Calu3 (cell line): ENCODE measurements at regions of chr9 and their contacts with region 1.

Region 1: GRCh38 chr9:4750023-4750673 is 9.1 kb upstream of the AK3 start:
- DNase-seq: no peak
- H3K4me3 Mint-ChIP-seq: no peak overlapping the region
- H3K27ac Mint-ChIP-seq: no peak overlapping the region
- H3K4me1 Mint-ChIP-seq: no peaks in the 10 kb centered on the region
- H3K27me3 Mint-ChIP-seq: peaks cover 17% of the 10 kb centered on the region
- CTCF ChIP-seq: no peak

Region 2: GRCh38 chr9:4814913-4815312 is 64.8 kb after region 1 on chr9:
- CTCF ChIA-PET with region 1: no interaction called
- intact Hi-C with region 1: no loop called
- DNase-seq: no peak
- H3K4me3 Mint-ChIP-seq: no peak overlapping the region
- H3K27ac Mint-ChIP-seq: peak overlapping the region; percentile 7
- H3K4me1 Mint-ChIP-seq: peaks cover 21% of the 10 kb centered on the region
- H3K27me3 Mint-ChIP-seq: no peaks in the 10 kb centered on the region
- CTCF ChIP-seq: no peak

Region 3: DNA sequence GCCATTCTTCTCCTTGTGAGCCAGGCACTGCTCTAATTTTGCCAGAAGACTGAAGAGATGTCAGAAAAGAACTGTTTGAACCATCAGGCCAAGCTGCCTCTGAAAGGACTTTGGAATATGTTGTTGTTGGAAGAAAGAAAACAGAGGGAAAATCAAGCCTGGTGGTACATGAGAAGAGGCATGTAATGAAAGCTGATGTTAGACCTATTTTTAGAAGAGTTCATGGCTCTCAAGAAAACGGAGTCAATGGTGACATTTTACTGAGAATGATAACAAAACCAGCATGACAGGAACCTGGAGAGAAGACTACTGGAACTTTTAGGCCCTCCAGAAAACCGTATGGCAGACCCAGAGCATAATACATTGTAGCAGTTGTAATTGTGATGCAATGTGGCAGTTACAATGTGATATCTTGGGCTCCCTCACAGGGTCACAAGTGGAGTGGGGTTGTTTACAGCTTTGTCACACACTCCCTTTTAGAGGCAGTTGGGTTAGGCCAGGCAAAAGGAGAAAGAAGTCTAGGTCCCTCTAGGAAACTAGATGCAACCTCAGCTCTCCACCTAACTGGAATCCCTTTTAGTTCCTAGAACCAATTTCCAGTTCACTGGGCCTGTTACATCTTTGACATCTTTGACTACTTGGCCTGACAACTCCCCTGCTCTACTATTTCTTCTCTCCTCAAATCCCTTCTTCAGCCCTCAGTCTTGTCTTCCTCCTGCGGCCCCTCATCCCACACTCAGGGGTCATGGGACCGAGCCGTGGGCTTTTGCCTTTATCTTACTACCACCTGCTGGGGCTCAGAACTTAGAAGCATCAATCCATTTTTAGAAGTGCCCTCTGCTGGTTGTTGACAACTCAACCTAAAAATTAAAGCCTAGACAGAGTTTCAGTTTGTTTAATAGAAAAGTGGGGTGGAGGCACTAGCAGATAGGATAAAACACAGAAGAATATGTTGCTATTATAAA is 173.7 kb after region 1 on chr9:
- CTCF ChIA-PET with region 1: no interaction called
- intact Hi-C with region 1: no loop called
- DNase-seq: peak; percentile 3
- H3K4me3 Mint-ChIP-seq: no peak overlapping the region
- H3K27ac Mint-ChIP-seq: no peak overlapping the region
- H3K4me1 Mint-ChIP-seq: peaks cover 8% of the 10 kb centered on the region
- H3K27me3 Mint-ChIP-seq: no peaks in the 10 kb centered on the region
- CTCF ChIP-seq: no peak

Region 4: DNA sequence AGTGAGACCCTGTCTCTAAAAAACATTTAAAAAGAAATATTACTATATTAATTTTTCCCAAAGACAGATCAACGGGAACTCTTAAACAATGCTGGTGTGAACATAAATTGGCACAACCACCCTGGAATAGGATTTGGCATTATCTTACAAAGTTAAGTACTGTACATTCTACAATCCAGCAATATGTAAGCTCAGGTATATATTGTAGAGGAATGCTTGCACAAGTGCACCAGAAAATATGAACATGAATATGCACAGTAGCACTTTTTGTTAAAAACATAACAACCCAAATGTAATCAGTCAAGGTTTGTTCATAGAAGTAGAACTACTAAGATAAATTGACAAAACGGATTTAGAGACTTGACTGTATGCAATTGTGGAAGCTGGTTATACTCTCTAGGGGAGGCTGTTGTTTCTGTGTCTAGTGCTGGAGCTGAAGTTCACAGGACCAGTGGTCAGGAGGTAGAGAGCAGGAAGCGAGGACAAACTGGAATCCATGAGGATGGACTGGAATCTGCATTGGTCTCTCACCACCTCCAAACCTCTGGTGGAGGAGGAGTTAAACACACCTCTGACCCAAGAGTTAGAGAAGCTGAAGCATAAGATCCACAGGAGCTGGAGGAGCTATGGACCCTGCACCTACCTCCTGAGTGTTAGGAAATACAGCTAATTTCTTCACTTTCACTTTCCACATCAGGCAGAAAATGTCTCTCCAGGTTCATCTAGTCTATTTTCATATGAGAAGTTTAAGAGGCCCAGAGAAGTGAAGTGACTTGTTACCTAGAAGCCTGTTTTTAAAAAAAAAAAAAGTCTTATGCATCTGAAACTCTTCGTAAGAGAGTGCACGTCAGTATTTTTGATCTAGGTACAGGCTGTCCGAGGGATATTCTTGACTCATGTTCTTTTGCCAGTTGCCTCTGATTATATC is 858.4 kb after region 1 on chr9:
- CTCF ChIA-PET with region 1: interaction called, 6 read pairs
- intact Hi-C with region 1: loop called (anchors 10 kb)
- DNase-seq: peak; percentile 15
- H3K4me3 Mint-ChIP-seq: peak overlapping the region; percentile 74
- H3K27ac Mint-ChIP-seq: no peak overlapping the region
- H3K4me1 Mint-ChIP-seq: peaks cover 7% of the 10 kb centered on the region
- H3K27me3 Mint-ChIP-seq: no peaks in the 10 kb centered on the region
- CTCF ChIP-seq: no peak